ENCODE measurements at regions of chr10 and their contacts with region 1.

Region 1: GRCh38 chr10:50417886-50418830 is 166.8 kb upstream of the ASAH2 start:
- DNase-seq: peak; percentile 84
- ATAC-seq: peak; percentile 94 to 95
- H3K4me3 ChIP-seq: peak overlapping the region; percentile 73
- H3K27ac ChIP-seq: peak overlapping the region; percentile 91
- H3K4me1 ChIP-seq: peaks cover 55% of the 10 kb centered on the region
- H3K27me3 ChIP-seq: no peaks in the 10 kb centered on the region
- CTCF ChIP-seq: peak; percentile 21

Region 2: DNA sequence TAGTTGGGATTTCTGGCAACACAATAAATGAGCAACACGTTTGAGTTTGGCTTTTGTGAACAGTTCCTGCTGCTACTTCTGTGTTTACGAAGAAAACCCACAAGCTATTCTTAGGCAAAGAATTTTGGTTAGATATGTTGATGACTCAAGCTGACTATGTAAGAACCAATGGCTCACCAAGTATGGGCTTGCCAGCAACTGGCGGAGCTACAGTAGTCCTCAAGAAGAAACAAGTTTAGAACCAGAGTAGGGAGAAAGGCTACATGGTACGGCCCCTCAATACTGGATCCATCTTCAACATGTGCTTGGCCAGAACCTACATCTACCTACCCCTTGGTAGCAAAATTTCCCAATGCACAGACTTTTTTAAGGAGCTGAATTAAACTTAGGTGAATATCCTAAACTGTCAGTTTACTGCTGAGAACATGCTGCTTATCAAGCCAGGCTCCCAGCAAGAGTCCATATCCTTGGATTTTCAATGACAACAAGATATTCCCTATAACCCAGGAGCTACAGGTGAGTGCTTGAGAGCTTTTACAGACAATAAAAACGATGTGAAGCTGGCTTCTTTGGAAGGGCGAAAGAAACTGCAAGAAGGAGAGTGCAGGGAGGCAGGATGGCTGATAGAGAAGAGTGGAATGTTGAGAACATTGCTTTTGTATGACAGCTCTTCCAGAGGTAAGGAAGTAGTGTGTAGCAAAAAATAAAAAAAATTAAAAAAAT is 92.5 kb before region 1 on chr10:
- intact Hi-C with region 1: loop called (anchors 10 kb)
- DNase-seq: peak; percentile 58
- ATAC-seq: peak; percentile 57 to 82
- H3K4me3 ChIP-seq: no peak overlapping the region
- H3K27ac ChIP-seq: peak overlapping the region; percentile 27
- H3K4me1 ChIP-seq: peaks cover 54% of the 10 kb centered on the region
- H3K27me3 ChIP-seq: no peaks in the 10 kb centered on the region
- CTCF ChIP-seq: no peak

Measured in lower lobe of right lung (tissue), 2 donors.